Calu3 (cell line): ENCODE measurements at regions of chr11 and their contacts with region 1.

Region 1: GRCh38 chr11:5004424-5005274 is 10.0 kb downstream of the OR51L1 start:
- DNase-seq: peak; percentile 58
- H3K4me3 Mint-ChIP-seq: no peak overlapping the region
- H3K27ac Mint-ChIP-seq: no peak overlapping the region
- H3K4me1 Mint-ChIP-seq: no peaks in the 10 kb centered on the region
- H3K27me3 Mint-ChIP-seq: peaks cover 13% of the 10 kb centered on the region
- CTCF ChIP-seq: peak; percentile 37

Region 2: GRCh38 chr11:4626207-4627099 is 378.2 kb before region 1 on chr11:
- CTCF ChIA-PET with region 1: no interaction called
- intact Hi-C with region 1: loop called (anchors 1 kb)
- DNase-seq: peak; percentile 77
- H3K4me3 Mint-ChIP-seq: no peak overlapping the region
- H3K27ac Mint-ChIP-seq: no peak overlapping the region
- H3K4me1 Mint-ChIP-seq: peaks cover 8% of the 10 kb centered on the region
- H3K27me3 Mint-ChIP-seq: peaks cover 64% of the 10 kb centered on the region
- CTCF ChIP-seq: peak; percentile 73

Region 3: GRCh38 chr11:4826425-4826824 is 178.2 kb before region 1 on chr11:
- CTCF ChIA-PET with region 1: no interaction called
- intact Hi-C with region 1: loop called (anchors 10 kb)
- DNase-seq: no peak
- H3K4me3 Mint-ChIP-seq: no peak overlapping the region
- H3K27ac Mint-ChIP-seq: no peak overlapping the region
- H3K4me1 Mint-ChIP-seq: no peaks in the 10 kb centered on the region
- H3K27me3 Mint-ChIP-seq: no peaks in the 10 kb centered on the region
- CTCF ChIP-seq: peak; percentile 23

Region 4: GRCh38 chr11:5043380-5043779 is 38.7 kb after region 1 on chr11:
- CTCF ChIA-PET with region 1: no interaction called
- intact Hi-C with region 1: no loop called
- DNase-seq: no peak
- H3K4me3 Mint-ChIP-seq: no peak overlapping the region
- H3K27ac Mint-ChIP-seq: no peak overlapping the region
- H3K4me1 Mint-ChIP-seq: peaks cover 11% of the 10 kb centered on the region
- H3K27me3 Mint-ChIP-seq: no peaks in the 10 kb centered on the region
- CTCF ChIP-seq: no peak

Region 5: DNA sequence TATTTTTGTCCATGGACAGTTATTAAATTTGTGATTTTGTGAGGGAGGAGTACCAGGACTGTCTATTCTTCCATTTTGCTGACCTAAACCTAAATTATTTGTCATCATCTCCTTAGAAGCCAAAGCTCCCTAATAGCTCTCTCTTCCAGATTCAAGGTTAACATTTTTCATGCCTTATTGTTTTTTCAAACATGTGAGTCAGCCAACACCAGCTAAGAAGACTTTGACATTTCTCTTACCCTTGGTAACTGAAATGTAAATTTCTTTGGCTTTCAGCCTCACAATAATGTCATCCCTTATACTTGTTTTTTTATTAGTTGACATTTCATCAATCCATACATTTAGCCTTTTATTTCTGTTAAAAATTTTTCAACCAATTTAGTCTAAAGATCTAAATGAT is 83.9 kb after region 1 on chr11:
- CTCF ChIA-PET with region 1: no interaction called
- intact Hi-C with region 1: no loop called
- DNase-seq: no peak
- H3K4me3 Mint-ChIP-seq: no peak overlapping the region
- H3K27ac Mint-ChIP-seq: no peak overlapping the region
- H3K4me1 Mint-ChIP-seq: peaks cover 12% of the 10 kb centered on the region
- H3K27me3 Mint-ChIP-seq: no peaks in the 10 kb centered on the region
- CTCF ChIP-seq: no peak